ENCODE measurements at regions of chr17 and their contacts with region 1.

Region 1: GRCh38 chr17:57379237-57379894 is 123.0 kb downstream of the MSI2 start:
- DNase-seq: peak; percentile 88 to 96 (median 92)
- ATAC-seq: peak; percentile 92
- H3K4me3 ChIP-seq: no peak overlapping the region
- H3K27ac ChIP-seq: peak overlapping the region; percentile 76
- H3K4me1 ChIP-seq: peaks cover 28 to 62% of the 10 kb centered on the region in 2 experiments
- H3K27me3 ChIP-seq: no peaks in the 10 kb centered on the region
- CTCF ChIP-seq: no peak
- EP300 ChIP-seq: peak; percentile 94
- POLR2A ChIP-seq: no peak
- RAD21 ChIP-seq: peak; percentile 27 to 44

Region 2: DNA sequence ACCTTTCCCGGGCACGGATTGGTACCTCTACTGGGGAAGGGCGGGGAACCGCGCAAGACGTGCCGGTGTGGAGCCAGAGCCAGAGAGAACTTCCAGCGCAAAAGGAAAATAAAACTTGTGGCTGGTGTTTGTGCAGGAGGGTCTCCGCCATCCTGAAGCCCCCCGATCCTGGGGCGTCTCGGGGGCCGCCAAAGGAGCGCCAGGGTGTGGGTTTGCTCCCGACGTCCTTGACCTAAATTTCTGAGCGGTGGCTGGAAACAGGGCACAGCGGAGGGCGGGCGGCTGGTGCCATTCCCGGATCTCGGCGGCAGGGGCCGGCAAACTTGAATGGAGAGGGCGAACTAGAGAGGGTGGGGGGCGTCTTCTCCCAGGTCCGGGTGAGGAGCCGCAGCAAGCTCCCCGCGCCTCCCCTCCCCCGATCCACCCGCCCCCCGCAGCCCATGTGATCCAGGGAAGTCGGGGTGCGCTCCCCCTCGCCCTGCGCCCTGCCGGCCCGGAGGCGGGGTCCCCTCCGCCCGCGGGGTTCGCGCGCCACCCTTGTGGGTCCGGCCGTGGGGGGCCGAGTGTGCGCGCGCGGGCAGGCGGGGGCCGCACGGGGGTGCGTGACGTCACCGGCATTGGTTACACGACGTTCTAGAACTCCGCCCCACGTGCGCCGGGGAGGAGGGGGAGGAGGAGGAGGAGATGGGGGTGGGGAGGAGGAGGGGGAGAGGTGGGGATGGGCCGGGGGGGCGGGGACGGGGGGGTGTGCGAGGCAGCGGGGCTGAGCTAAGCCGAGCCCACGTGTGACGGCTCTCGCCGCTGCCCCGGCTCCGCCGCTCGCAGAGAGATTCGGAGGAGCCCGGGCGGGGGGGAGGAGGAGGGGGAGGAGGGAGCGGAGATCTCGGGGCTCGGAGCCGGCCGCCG is 123.3 kb before region 1 on chr17 and contains the start of gene MSI2:
- CTCF ChIA-PET with region 1: no interaction called
- POLR2A ChIA-PET with region 1: no interaction called
- in situ Hi-C with region 1: no loop called
- intact Hi-C with region 1: loop called (anchors 2 kb)
- DNase-seq: peak; percentile 88 to 94 (median 91)
- ATAC-seq: peak; percentile 89
- H3K4me3 ChIP-seq: peak within 1 kb of the TSS; percentile 78
- H3K27ac ChIP-seq: peak within 1 kb of the TSS; percentile 79
- H3K4me1 ChIP-seq: peaks cover 10 to 13% of the 10 kb centered on the region in 2 experiments; a peak in 4 of 5 replicates
- H3K27me3 ChIP-seq: no peaks in the 10 kb centered on the region
- CTCF ChIP-seq: no peak
- EP300 ChIP-seq: no peak
- POLR2A ChIP-seq: no peak
- RAD21 ChIP-seq: no peak
- polyA plus RNA-seq, gene MSI2: 4.6 to 5.3 TPM

Region 3: GRCh38 chr17:57284984-57285646 is 94.3 kb before region 1 on chr17:
- CTCF ChIA-PET with region 1: no interaction called
- POLR2A ChIA-PET with region 1: no interaction called
- in situ Hi-C with region 1: no loop called
- intact Hi-C with region 1: loop called (anchors 1 kb)
- DNase-seq: peak; percentile 46 to 75 (median 60)
- ATAC-seq: peak; percentile 82
- H3K4me3 ChIP-seq: peak overlapping the region; percentile 16
- H3K27ac ChIP-seq: peak overlapping the region; percentile 73
- H3K4me1 ChIP-seq: peaks cover 24 to 58% of the 10 kb centered on the region in 2 experiments
- H3K27me3 ChIP-seq: no peaks in the 10 kb centered on the region
- CTCF ChIP-seq: 0 out of 6 replicates have a peak, but pooled peaks of 1 of the 3 experiments have one; percentile 0
- EP300 ChIP-seq: peak; percentile 64; the same call in 1 of the 2 replicates
- POLR2A ChIP-seq: no peak
- RAD21 ChIP-seq: peak in 1 of 2 experiments; percentile 28; a peak in 2 of 4 replicates